T-cell (primary cell): ENCODE measurements at regions of chr7 and their contacts with region 1.

Region 1: GRCh38 chr7:158863611-158864506 is 7.5 kb downstream of the DYNC2I1 start:
- DNase-seq: peak in 21 of 35 experiments; percentile 6 to 42 (median 22)
- ATAC-seq: peak; percentile 44 to 84 (median 54)
- H3K4me3 ChIP-seq: peak overlapping the region; percentile 39 to 55
- H3K4me3 Mint-ChIP-seq: peak overlapping the region; percentile 78 to 92 (median 90)
- H3K27ac ChIP-seq: peak overlapping the region; percentile 35
- H3K27ac Mint-ChIP-seq: peak overlapping the region; percentile 74 to 83
- H3K4me1 ChIP-seq: peaks cover 10 to 19% of the 10 kb centered on the region in 2 experiments
- H3K4me1 Mint-ChIP-seq: peaks cover 36 to 49% (median 48%) of the 10 kb centered on the region in 3 donors
- H3K27me3 ChIP-seq: no peaks in the 10 kb centered on the region
- H3K27me3 Mint-ChIP-seq: no peaks in the 10 kb centered on the region

Region 2: GRCh38 chr7:158695726-158696452 is 168.0 kb before region 1 on chr7:
- CTCF ChIA-PET with region 1: interaction called in 1 of 2 experiments, 3 read pairs
- POLR2A ChIA-PET with region 1: interaction called in 1 of 2 experiments, 11 read pairs
- DNase-seq: peak in 32 of 35 experiments; percentile 6 to 81 (median 38)
- ATAC-seq: peak; percentile 89 to 99 (median 98)
- H3K4me3 ChIP-seq: no peak overlapping the region
- H3K4me3 Mint-ChIP-seq: peak overlapping the region in 2 of 3 donors; percentile 32 to 50
- H3K27ac ChIP-seq: no peak overlapping the region
- H3K27ac Mint-ChIP-seq: peak overlapping the region; percentile 45 to 63
- H3K4me1 ChIP-seq: peaks cover 0 to 10% of the 10 kb centered on the region in 2 experiments
- H3K4me1 Mint-ChIP-seq: peaks cover 5 to 21% (median 10%) of the 10 kb centered on the region in 3 donors
- H3K27me3 ChIP-seq: no peaks in the 10 kb centered on the region
- H3K27me3 Mint-ChIP-seq: no peaks in the 10 kb centered on the region

Region 3: GRCh38 chr7:158789842-158790241 is 74.0 kb before region 1 on chr7:
- CTCF ChIA-PET with region 1: interaction called in 1 of 2 experiments, 7 read pairs
- POLR2A ChIA-PET with region 1: interaction called in 1 of 2 experiments, 21 read pairs
- DNase-seq: no peak
- ATAC-seq: no peak
- H3K4me3 ChIP-seq: no peak overlapping the region
- H3K4me3 Mint-ChIP-seq: no peak overlapping the region
- H3K27ac ChIP-seq: no peak overlapping the region
- H3K27ac Mint-ChIP-seq: no peak overlapping the region
- H3K4me1 ChIP-seq: peaks cover 0 to 4% of the 10 kb centered on the region in 2 experiments
- H3K4me1 Mint-ChIP-seq: peaks cover 2 to 5% (median 3%) of the 10 kb centered on the region in 3 donors
- H3K27me3 ChIP-seq: no peaks in the 10 kb centered on the region
- H3K27me3 Mint-ChIP-seq: no peaks in the 10 kb centered on the region

Region 4: GRCh38 chr7:158824028-158824427 is 39.8 kb before region 1 on chr7:
- CTCF ChIA-PET with region 1: interaction called in 1 of 2 experiments, 3 read pairs
- POLR2A ChIA-PET with region 1: interaction called, 12 to 13 read pairs
- DNase-seq: peak in 34 of 35 experiments; percentile 41 to 89 (median 68)
- ATAC-seq: peak; percentile 72 to 77 (median 74)
- H3K4me3 ChIP-seq: no peak overlapping the region
- H3K4me3 Mint-ChIP-seq: peak overlapping the region; percentile 40 to 99 (median 53)
- H3K27ac ChIP-seq: peak overlapping the region; percentile 67
- H3K27ac Mint-ChIP-seq: peak overlapping the region; percentile 78 to 84
- H3K4me1 ChIP-seq: peaks cover 42 to 60% of the 10 kb centered on the region in 2 experiments
- H3K4me1 Mint-ChIP-seq: peaks cover 71 to 75% (median 75%) of the 10 kb centered on the region in 3 donors
- H3K27me3 ChIP-seq: no peaks in the 10 kb centered on the region
- H3K27me3 Mint-ChIP-seq: no peaks in the 10 kb centered on the region